ENCODE measurements at regions of chr12 and their contacts with region 1.

Region 1: GRCh38 chr12:120257041-120257821 is 8.3 kb downstream of the PXN start:
- DNase-seq: peak in 1 of 14 experiments; percentile 27
- ATAC-seq: no peak
- H3K4me3 ChIP-seq: no peak overlapping the region
- H3K4me3 Mint-ChIP-seq: peak overlapping the region; percentile 77
- H3K27ac ChIP-seq: peak overlapping the region; percentile 33 to 51
- H3K27ac Mint-ChIP-seq: peak overlapping the region; percentile 95
- H3K4me1 ChIP-seq: peaks cover 97% of the 10 kb centered on the region
- H3K4me1 Mint-ChIP-seq: peaks cover 89% of the 10 kb centered on the region
- H3K27me3 ChIP-seq: no peaks in the 10 kb centered on the region
- H3K27me3 Mint-ChIP-seq: no peaks in the 10 kb centered on the region
- CTCF ChIP-seq: no peak

Region 2: DNA sequence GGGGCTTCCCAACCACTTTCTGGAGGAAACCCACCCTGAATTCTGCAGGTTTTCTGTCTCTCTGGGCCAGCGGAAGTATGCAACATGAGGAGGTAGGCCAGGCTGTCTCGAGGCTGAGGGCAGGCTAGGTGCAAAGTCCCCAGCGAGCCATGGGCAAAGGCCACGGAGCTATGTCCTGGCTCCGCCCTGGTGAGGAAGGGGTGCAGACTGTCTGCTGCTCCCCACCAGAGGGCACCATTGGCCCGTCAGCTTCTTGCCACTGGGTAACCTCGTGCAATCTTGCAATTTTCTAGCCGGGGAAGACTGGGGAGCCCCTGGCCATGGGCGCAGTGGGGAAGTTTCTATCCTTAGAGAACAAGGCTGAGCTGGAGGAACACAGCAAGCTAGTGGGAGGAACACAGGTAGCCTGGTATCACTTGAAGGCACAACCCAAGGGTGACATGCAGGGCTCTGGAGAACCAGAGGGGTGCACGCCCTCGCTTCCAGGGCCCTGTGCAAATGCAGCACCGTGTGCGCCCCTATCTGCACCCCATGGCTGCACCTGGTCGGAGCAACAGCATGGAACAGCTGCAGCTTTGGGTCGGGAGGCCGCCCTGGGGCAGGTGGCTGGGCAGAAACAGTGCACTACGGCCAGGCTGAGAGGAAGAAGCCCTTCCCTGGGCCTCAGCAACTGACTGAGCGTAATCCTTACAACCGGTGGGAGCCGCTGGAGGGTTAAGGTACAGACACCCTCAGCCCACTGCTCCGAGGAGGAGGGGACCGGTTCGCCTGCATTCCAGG is 28.8 kb before region 1 on chr12:
- CTCF ChIA-PET with region 1: interaction called, 234 read pairs
- POLR2A ChIA-PET with region 1: interaction called, 192 read pairs
- intact Hi-C with region 1: loop called in 1 of 2 experiments (anchors 1 kb)
- DNase-seq: peak; percentile 83 to 94 (median 88)
- ATAC-seq: peak; percentile 69
- H3K4me3 ChIP-seq: peak overlapping the region; percentile 28
- H3K4me3 Mint-ChIP-seq: peak overlapping the region; percentile 65
- H3K27ac ChIP-seq: peak overlapping the region in 1 of 2 donors; percentile 26
- H3K27ac Mint-ChIP-seq: peak overlapping the region; percentile 70
- H3K4me1 ChIP-seq: peaks cover 95% of the 10 kb centered on the region
- H3K4me1 Mint-ChIP-seq: peaks cover 91% of the 10 kb centered on the region
- H3K27me3 ChIP-seq: no peaks in the 10 kb centered on the region
- H3K27me3 Mint-ChIP-seq: no peaks in the 10 kb centered on the region
- CTCF ChIP-seq: peak; percentile 93

Measured in CD4-positive, alpha-beta T cell (primary cell).